ENCODE measurements at regions of chr3 and their contacts with region 1.

Region 1: GRCh38 chr3:32502118-32502945 is at the start of gene CMTM6:
- DNase-seq: peak; percentile 39 to 67
- H3K4me3 ChIP-seq: peak within 1 kb of the TSS; percentile 79
- H3K27ac ChIP-seq: peak within 1 kb of the TSS; percentile 51
- H3K4me1 ChIP-seq: peaks cover 8% of the 10 kb centered on the region; the same call in 1 of the 2 replicates
- H3K27me3 ChIP-seq: no peaks in the 10 kb centered on the region
- CTCF ChIP-seq: no peak
- total RNA-seq, gene CMTM6: 61.0 and 69.4 TPM in 2 replicates

Region 2: DNA sequence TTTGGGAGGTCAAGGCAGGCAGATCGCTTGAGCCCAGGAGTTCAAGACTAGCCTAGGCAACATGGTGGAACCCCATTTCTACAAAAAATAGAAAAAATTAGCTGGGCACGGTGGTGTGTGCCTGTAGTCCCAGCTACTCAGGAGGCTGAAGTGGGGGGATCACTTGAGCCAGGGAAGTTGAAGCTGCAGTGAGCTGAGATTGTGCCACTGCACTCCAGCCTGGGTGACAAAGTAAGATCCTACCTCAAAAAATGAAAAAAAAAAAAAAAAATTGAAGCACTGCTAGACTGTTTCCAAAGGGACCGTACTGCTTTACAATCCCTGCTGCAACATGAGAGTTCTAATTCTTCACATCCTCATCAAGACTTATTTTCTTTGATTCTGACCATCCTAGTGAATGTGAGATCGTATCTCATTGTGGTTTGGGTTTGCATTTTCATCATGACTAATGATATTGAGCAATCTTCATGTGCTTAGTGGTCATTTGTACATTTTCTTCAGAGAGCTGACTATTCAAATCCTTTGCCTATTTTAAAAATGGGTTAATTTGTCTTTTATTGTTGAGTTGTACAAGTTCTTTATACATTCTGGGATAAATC is 253.0 kb before region 1 on chr3:
- CTCF ChIA-PET with region 1: interaction called, 15 read pairs
- POLR2A ChIA-PET with region 1: no interaction called
- intact Hi-C with region 1: no loop called
- DNase-seq: peak; percentile 17 to 88
- H3K4me3 ChIP-seq: no peak overlapping the region
- H3K27ac ChIP-seq: peak overlapping the region; percentile 84
- H3K4me1 ChIP-seq: peaks cover 30% of the 10 kb centered on the region
- H3K27me3 ChIP-seq: no peaks in the 10 kb centered on the region
- CTCF ChIP-seq: no peak

Region 3: GRCh38 chr3:32570421-32571191 is 68.3 kb after region 1 on chr3 and contains the start of gene DYNC1LI1:
- CTCF ChIA-PET with region 1: interaction called, 5 read pairs
- POLR2A ChIA-PET with region 1: no interaction called
- intact Hi-C with region 1: loop called (anchors 1 kb)
- DNase-seq: peak; percentile 62 to 93
- H3K4me3 ChIP-seq: peak within 1 kb of the TSS; percentile 78
- H3K27ac ChIP-seq: peak within 1 kb of the TSS; percentile 78
- H3K4me1 ChIP-seq: peaks cover 8% of the 10 kb centered on the region; the same call in 1 of the 2 replicates
- H3K27me3 ChIP-seq: no peaks in the 10 kb centered on the region
- CTCF ChIP-seq: no peak
- total RNA-seq, gene DYNC1LI1: 30.1 and 32.3 TPM in 2 replicates

Region 4: GRCh38 chr3:32603064-32603463 is 100.7 kb after region 1 on chr3:
- CTCF ChIA-PET with region 1: no interaction called
- POLR2A ChIA-PET with region 1: no interaction called
- intact Hi-C with region 1: no loop called
- DNase-seq: no peak
- H3K4me3 ChIP-seq: no peak overlapping the region
- H3K27ac ChIP-seq: no peak overlapping the region
- H3K4me1 ChIP-seq: no peaks in the 10 kb centered on the region
- H3K27me3 ChIP-seq: no peaks in the 10 kb centered on the region
- CTCF ChIP-seq: no peak

Region 5: DNA sequence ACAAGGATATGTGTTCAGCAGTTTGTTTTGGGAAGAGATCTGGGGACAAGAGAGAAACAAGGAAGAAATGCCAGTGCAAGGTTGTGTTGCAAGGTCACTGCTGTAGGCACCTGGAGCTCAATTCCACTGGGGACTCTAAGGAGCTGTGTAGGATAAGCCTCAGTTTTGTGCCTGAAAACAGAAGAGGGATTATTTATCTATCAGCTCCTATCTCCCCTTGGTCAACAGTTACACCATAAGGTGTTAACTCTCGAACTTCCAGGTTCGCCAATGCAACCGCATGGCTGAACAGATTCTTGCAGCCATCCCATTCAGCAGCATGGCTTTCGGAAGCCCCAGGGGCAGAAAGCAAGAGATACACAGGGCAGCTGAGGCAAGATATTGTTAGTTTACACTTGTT is 141.0 kb after region 1 on chr3:
- CTCF ChIA-PET with region 1: interaction called, 14 read pairs
- POLR2A ChIA-PET with region 1: no interaction called
- intact Hi-C with region 1: no loop called
- DNase-seq: no peak
- H3K4me3 ChIP-seq: no peak overlapping the region
- H3K27ac ChIP-seq: no peak overlapping the region
- H3K4me1 ChIP-seq: no peaks in the 10 kb centered on the region
- H3K27me3 ChIP-seq: no peaks in the 10 kb centered on the region
- CTCF ChIP-seq: no peak

Region 6: DNA sequence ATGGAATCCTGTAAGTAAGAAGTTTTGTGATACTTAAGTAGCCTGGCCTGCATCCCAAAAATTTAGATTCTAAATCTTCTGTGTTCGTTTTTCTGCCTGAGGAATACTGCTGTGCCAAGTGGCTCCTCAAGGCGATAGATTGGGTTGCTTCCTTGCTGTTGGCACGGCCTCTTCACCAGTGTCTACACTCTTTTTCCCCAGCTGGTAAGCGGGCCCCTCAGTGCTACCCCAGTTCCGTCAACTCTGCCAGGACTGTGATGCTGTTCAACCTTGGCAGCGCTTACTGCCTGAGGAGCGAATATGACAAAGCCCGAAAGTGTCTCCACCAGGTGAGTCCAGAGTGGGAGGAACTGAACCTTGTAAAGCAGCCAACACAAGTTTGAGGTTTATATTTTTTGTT is 262.1 kb after region 1 on chr3:
- CTCF ChIA-PET with region 1: no interaction called
- POLR2A ChIA-PET with region 1: no interaction called
- intact Hi-C with region 1: no loop called
- DNase-seq: no peak
- H3K4me3 ChIP-seq: no peak overlapping the region
- H3K27ac ChIP-seq: no peak overlapping the region
- H3K4me1 ChIP-seq: no peaks in the 10 kb centered on the region
- H3K27me3 ChIP-seq: no peaks in the 10 kb centered on the region
- CTCF ChIP-seq: no peak

Region 7: GRCh38 chr3:32892625-32893598 is 390.6 kb after region 1 on chr3:
- CTCF ChIA-PET with region 1: interaction called, 16 read pairs
- POLR2A ChIA-PET with region 1: no interaction called
- intact Hi-C with region 1: no loop called
- DNase-seq: no peak
- H3K4me3 ChIP-seq: no peak overlapping the region
- H3K27ac ChIP-seq: no peak overlapping the region
- H3K4me1 ChIP-seq: no peaks in the 10 kb centered on the region
- H3K27me3 ChIP-seq: no peaks in the 10 kb centered on the region
- CTCF ChIP-seq: no peak

Measured in PC-9 (cell line).